Dorsolateral prefrontal cortex (tissue), 120 donors: ENCODE measurements at regions of chr4 and their contacts with region 1.

Region 1: GRCh38 chr4:122588453-122589238 is 32.2 kb downstream of the IL21 start:
- DNase-seq: no peak
- H3K4me3 ChIP-seq: no peak overlapping the region
- H3K27ac ChIP-seq: no peak overlapping the region
- H3K27me3 ChIP-seq: no peaks in the 10 kb centered on the region
- CTCF ChIP-seq: no peak

Region 2: GRCh38 chr4:122716825-122717448 is 128.3 kb after region 1 on chr4:
- intact Hi-C with region 1: loop called in 1 of 2 experiments (anchors 5 kb)
- DNase-seq: peak in 7 of 10 donors; percentile 11 to 73 (median 58)
- H3K4me3 ChIP-seq: no peak overlapping the region
- H3K27ac ChIP-seq: no peak overlapping the region
- H3K27me3 ChIP-seq: no peaks in the 10 kb centered on the region
- CTCF ChIP-seq: peak; percentile 22 to 84 (median 69)

Region 3: DNA sequence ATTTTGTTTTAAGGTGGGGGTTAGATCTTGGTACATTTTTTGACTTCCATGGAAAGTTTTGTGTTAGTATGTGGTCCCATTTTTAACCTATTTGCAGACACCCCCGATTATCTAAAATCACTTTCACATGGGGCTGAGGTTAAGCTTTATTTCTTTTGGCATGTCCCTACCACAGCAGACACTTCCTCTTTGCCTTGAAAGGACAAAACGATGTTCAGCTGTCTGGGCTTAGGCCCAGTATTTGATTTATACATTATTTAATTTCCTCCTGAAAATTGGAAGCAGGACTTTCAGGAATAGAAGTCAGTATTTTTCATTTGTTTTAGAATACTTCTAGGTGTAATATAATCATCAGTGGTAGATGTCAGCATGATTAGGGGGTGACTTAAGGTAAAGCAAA is 695.5 kb after region 1 on chr4:
- intact Hi-C with region 1: no loop called
- DNase-seq: no peak
- H3K4me3 ChIP-seq: no peak overlapping the region
- H3K27ac ChIP-seq: no peak overlapping the region
- H3K27me3 ChIP-seq: no peaks in the 10 kb centered on the region
- CTCF ChIP-seq: no peak